Tibial artery (tissue), 4 donors: ENCODE measurements at regions of chr6 and their contacts with region 1.

Region 1: GRCh38 chr6:30493643-30494250 is 4.4 kb downstream of the HLA-E start:
- DNase-seq: no peak
- H3K4me3 ChIP-seq: no peak overlapping the region
- H3K27ac ChIP-seq: no peak overlapping the region
- H3K4me1 ChIP-seq: peaks cover 0 to 26% (median 17%) of the 10 kb centered on the region in 4 donors
- H3K27me3 ChIP-seq: no peaks in the 10 kb centered on the region
- CTCF ChIP-seq: no peak

Region 2: GRCh38 chr6:30914076-30914853 is 420.5 kb after region 1 on chr6 and contains the start of gene VARS2:
- intact Hi-C with region 1: loop called (anchors 2 kb)
- DNase-seq: peak; percentile 90 to 97
- H3K4me3 ChIP-seq: peak within 1 kb of the TSS; percentile 53 to 63
- H3K27ac ChIP-seq: peak within 1 kb of the TSS; percentile 85 to 87
- H3K4me1 ChIP-seq: peaks cover 0 to 38% (median 25%) of the 10 kb centered on the region in 4 donors
- H3K27me3 ChIP-seq: no peaks in the 10 kb centered on the region
- CTCF ChIP-seq: peak; percentile 33 to 43